CD8-positive, alpha-beta T cell (primary cell): ENCODE measurements at regions of chr6 and their contacts with region 1.

Region 1: GRCh38 chr6:33014841-33015634 is 5.6 kb upstream of the HLA-DOA start:
- DNase-seq: peak in 7 of 9 experiments; percentile 43 to 89 (median 56)
- ATAC-seq: peak; percentile 74
- H3K4me3 ChIP-seq: no peak overlapping the region
- H3K4me3 Mint-ChIP-seq: no peak overlapping the region
- H3K27ac ChIP-seq: no peak overlapping the region
- H3K27ac Mint-ChIP-seq: no peak overlapping the region
- H3K4me1 ChIP-seq: peaks cover 23% of the 10 kb centered on the region
- H3K4me1 Mint-ChIP-seq: peaks cover 35% of the 10 kb centered on the region
- H3K27me3 ChIP-seq: no peaks in the 10 kb centered on the region
- H3K27me3 Mint-ChIP-seq: no peaks in the 10 kb centered on the region
- CTCF ChIP-seq: peak; percentile 87

Region 2: GRCh38 chr6:33000055-33000454 is 15.0 kb before region 1 on chr6:
- CTCF ChIA-PET with region 1: interaction called, 11 read pairs
- POLR2A ChIA-PET with region 1: interaction called, 3 read pairs
- intact Hi-C with region 1: no loop called
- DNase-seq: peak in 3 of 9 experiments; percentile 40 to 65 (median 46)
- ATAC-seq: peak; percentile 44
- H3K4me3 ChIP-seq: no peak overlapping the region
- H3K4me3 Mint-ChIP-seq: no peak overlapping the region
- H3K27ac ChIP-seq: no peak overlapping the region
- H3K27ac Mint-ChIP-seq: no peak overlapping the region
- H3K4me1 ChIP-seq: peaks cover 7% of the 10 kb centered on the region
- H3K4me1 Mint-ChIP-seq: peaks cover 6% of the 10 kb centered on the region
- H3K27me3 ChIP-seq: no peaks in the 10 kb centered on the region
- H3K27me3 Mint-ChIP-seq: peaks cover 11% of the 10 kb centered on the region
- CTCF ChIP-seq: no peak

Region 3: DNA sequence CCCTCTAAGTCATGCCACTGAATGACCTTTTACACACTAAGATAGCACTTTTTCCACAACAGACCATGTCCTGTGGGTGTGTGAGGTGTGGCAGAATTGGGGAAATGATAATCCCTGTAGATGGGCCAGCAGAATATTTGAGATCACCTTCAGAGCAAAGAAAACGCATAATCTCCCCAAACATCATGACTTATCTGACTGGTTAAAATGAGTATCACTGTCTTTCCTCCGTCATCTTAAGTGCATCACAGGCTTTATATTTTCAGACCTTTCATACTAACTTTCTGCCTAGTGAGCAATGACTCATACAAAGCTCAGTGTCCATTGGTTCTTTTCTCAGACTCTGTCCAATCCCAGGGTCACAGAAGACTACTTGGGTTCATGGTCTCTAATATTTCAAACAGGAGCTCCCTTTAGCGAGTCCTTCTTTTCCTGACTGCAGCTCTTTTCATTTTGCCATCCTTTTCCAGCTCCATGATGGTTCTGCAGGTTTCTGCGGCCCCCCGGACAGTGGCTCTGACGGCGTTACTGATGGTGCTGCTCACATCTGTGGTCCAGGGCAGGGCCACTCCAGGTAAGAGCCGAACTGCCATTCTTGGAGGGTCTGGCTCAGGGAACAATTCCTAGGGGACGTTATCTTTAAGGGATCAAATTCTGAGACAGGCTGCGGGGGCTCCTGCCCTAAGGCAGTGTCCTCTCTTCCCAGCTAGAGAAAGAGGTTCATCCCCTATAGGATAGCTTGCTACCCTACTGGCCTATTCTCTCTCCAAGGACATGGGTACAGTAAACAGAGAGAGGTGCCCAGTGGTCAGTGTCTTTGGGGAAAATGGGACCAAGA is 60.7 kb after region 1 on chr6 and contains the start of gene HLA-DPB1:
- CTCF ChIA-PET with region 1: interaction called, 11 read pairs
- POLR2A ChIA-PET with region 1: interaction called, 5 read pairs
- intact Hi-C with region 1: loop called (anchors 2 to 5 kb)
- DNase-seq: peak in 6 of 9 experiments; percentile 17 to 92 (median 45)
- ATAC-seq: peak; percentile 94
- H3K4me3 ChIP-seq: peak within 1 kb of the TSS; percentile 56 to 94
- H3K4me3 Mint-ChIP-seq: peak within 1 kb of the TSS; percentile 90
- H3K27ac ChIP-seq: peak within 1 kb of the TSS; percentile 66 to 91
- H3K27ac Mint-ChIP-seq: peak within 1 kb of the TSS; percentile 89
- H3K4me1 ChIP-seq: peaks cover 32% of the 10 kb centered on the region
- H3K4me1 Mint-ChIP-seq: peaks cover 73% of the 10 kb centered on the region
- H3K27me3 ChIP-seq: no peaks in the 10 kb centered on the region
- H3K27me3 Mint-ChIP-seq: no peaks in the 10 kb centered on the region
- CTCF ChIP-seq: no peak
- total RNA-seq, gene HLA-DPB1: 55.3 to 58.6 TPM

Region 4: GRCh38 chr6:33091957-33092356 is 76.9 kb after region 1 on chr6:
- CTCF ChIA-PET with region 1: interaction called, 26 read pairs
- POLR2A ChIA-PET with region 1: no interaction called
- intact Hi-C with region 1: loop called (anchors 1 kb)
- DNase-seq: peak; percentile 40 to 79 (median 67)
- ATAC-seq: peak; percentile 86
- H3K4me3 ChIP-seq: no peak overlapping the region
- H3K4me3 Mint-ChIP-seq: no peak overlapping the region
- H3K27ac ChIP-seq: no peak overlapping the region
- H3K27ac Mint-ChIP-seq: no peak overlapping the region
- H3K4me1 ChIP-seq: peaks cover 7% of the 10 kb centered on the region
- H3K4me1 Mint-ChIP-seq: peaks cover 3% of the 10 kb centered on the region
- H3K27me3 ChIP-seq: no peaks in the 10 kb centered on the region
- H3K27me3 Mint-ChIP-seq: peaks cover 13% of the 10 kb centered on the region
- CTCF ChIP-seq: peak; percentile 65

Region 5: DNA sequence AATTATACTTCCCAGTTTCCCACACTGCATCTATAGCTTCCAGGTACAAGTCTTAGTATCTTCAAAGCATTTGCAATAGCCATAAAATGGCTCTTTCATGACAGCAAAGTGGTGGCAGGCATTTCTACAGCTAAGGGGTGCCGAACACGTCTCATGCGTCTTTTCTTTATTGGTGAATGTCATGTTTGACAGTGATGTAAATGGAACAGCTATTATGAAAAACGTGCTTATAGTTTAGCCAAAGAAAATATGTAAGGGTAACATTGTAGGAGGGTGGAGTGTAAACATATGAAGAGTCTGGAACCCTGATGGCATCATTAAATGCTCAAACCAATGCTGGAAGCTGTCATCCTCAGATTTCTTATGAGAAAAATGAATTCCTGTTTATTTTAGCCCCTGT is 139.3 kb after region 1 on chr6:
- CTCF ChIA-PET with region 1: interaction called, 27 read pairs
- POLR2A ChIA-PET with region 1: interaction called, 3 read pairs
- intact Hi-C with region 1: loop called in 1 of 2 experiments (anchors 2 kb)
- DNase-seq: no peak
- ATAC-seq: no peak
- H3K4me3 ChIP-seq: no peak overlapping the region
- H3K4me3 Mint-ChIP-seq: no peak overlapping the region
- H3K27ac ChIP-seq: no peak overlapping the region
- H3K27ac Mint-ChIP-seq: no peak overlapping the region
- H3K4me1 ChIP-seq: no peaks in the 10 kb centered on the region
- H3K4me1 Mint-ChIP-seq: no peaks in the 10 kb centered on the region
- H3K27me3 ChIP-seq: peaks cover 0 to 2% of the 10 kb centered on the region in 2 experiments
- H3K27me3 Mint-ChIP-seq: peaks cover 16% of the 10 kb centered on the region
- CTCF ChIP-seq: no peak